ENCODE measurements at regions of chr4 and their contacts with region 1.

Region 1: DNA sequence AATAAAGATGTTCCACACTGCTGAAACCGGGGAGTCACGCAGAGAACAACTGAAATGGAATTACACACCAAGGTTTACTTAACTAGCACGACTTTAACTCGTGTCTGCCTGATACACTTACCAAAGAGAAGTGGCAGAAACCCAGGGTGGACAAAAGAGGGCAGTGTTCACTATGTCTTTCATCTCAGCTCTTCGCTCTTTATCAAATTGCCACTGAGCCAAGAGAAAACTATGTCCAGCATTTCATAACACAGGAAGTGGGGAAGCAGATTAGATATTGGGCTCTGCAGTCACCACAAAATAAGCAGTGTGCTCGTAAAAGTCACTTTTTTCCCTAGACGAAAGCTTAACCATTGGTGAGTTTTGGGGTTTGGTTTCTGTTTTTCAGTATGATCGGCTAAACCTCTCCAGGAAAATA is 155.7 kb downstream of the CHIC2 start:
- DNase-seq: peak; percentile 87
- H3K4me3 ChIP-seq: peak overlapping the region; percentile 36
- H3K27ac ChIP-seq: peak overlapping the region; percentile 22
- H3K27me3 ChIP-seq: no peaks in the 10 kb centered on the region
- CTCF ChIP-seq: peak; percentile 82

Region 2: GRCh38 chr4:53706422-53707032 is 202.1 kb before region 1 on chr4:
- CTCF ChIA-PET with region 1: interaction called, 23 read pairs
- POLR2A ChIA-PET with region 1: no interaction called
- DNase-seq: no peak
- H3K4me3 ChIP-seq: no peak overlapping the region
- H3K27ac ChIP-seq: no peak overlapping the region
- H3K27me3 ChIP-seq: no peaks in the 10 kb centered on the region
- CTCF ChIP-seq: peak; percentile 74

Region 3: DNA sequence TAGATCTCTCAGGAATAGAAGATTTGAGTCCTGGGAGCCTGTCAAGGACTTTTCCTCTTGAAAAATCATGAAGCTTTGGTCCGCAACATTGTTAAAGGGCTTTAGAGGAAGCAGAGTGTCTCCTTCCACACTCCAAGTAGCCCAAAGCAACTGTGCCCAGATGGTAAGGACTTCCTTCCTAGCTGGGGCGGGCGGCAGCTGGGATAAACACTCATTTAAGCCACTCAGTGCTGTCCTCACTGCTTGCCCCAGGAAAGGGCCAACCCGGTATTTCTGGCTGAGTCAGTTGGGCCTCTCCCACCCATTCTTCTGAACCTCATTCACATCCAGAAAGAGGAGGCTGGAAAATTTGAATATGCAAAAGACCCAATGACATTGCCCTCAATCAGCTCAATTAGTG is 11.4 kb after region 1 on chr4:
- CTCF ChIA-PET with region 1: interaction called, 11 read pairs
- POLR2A ChIA-PET with region 1: no interaction called
- DNase-seq: no peak
- H3K4me3 ChIP-seq: no peak overlapping the region
- H3K27ac ChIP-seq: no peak overlapping the region
- H3K27me3 ChIP-seq: no peaks in the 10 kb centered on the region
- CTCF ChIP-seq: no peak

Region 4: DNA sequence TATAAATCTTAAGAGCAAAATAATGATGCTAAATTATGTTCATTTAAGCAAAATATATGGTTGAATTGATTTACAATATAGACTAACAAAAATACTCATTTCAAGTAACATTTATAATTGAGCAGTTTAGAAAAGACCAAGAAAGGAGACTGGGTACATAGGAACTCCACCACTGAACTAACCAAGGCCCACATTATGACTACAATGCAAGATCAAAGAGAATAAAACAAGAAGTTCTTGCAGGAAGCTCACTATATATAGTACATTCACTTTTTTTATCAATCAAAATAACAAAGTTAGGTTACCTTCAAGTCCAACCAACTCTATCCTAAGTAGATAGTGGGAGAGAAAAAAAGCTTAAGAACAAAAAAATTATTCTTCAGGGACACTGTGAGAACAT is 147.7 kb after region 1 on chr4:
- CTCF ChIA-PET with region 1: interaction called, 12 read pairs
- POLR2A ChIA-PET with region 1: no interaction called
- DNase-seq: no peak
- H3K4me3 ChIP-seq: no peak overlapping the region
- H3K27ac ChIP-seq: no peak overlapping the region
- H3K27me3 ChIP-seq: no peaks in the 10 kb centered on the region
- CTCF ChIP-seq: no peak

Region 5: GRCh38 chr4:54227256-54228055 is 318.8 kb after region 1 on chr4:
- CTCF ChIA-PET with region 1: interaction called, 26 read pairs
- POLR2A ChIA-PET with region 1: interaction called, 14 read pairs
- DNase-seq: no peak
- H3K4me3 ChIP-seq: peak overlapping the region; percentile 97
- H3K27ac ChIP-seq: peak overlapping the region; percentile 75
- H3K27me3 ChIP-seq: no peaks in the 10 kb centered on the region
- CTCF ChIP-seq: no peak